Activated T-helper 2 cell treated with anti-CD3 and anti-CD28 coated beads, Interferon-gamma antibody, Interleukin-2, Interleukin-4, amounts not matched to agents 10 μg/mL and 5 μg/mL and 100 μg/mL, durations not matched to agents 14 hours and 24 hours and 36 hours (primary cell): ENCODE measurements at regions of chr17 and their contacts with region 1.

Region 1: GRCh38 chr17:49230636-49231562 is at the start of gene PHOSPHO1:
- DNase-seq: peak; percentile 83
- H3K4me3 Mint-ChIP-seq: peak within 1 kb of the TSS; percentile 78
- H3K27ac Mint-ChIP-seq: no peak within 1 kb of the TSS
- H3K4me1 Mint-ChIP-seq: peaks cover 12% of the 10 kb centered on the region
- H3K27me3 Mint-ChIP-seq: peaks cover 33% of the 10 kb centered on the region
- total RNA-seq, gene PHOSPHO1: not detected in 2 replicates

Region 2: DNA sequence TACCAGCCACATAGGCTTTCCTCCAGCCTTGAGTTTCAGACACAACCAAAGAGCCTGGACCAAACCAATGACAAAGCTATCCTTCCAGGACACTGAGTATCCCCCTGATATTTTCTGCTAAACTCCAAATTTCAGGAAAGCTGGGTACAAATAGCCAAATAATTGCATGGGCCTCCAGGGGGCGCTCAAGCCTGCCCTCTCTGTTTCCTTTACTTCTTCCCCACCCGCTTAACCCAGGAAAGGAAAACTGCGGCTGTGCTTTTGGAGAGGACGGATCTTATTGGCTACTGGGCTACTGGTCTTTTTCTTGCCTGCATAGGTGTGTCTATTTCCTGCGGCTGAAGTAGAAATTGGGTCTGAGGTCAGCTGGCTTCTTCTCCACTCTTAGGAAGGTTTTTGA is 50.6 kb before region 1 on chr17:
- intact Hi-C with region 1: loop called (anchors 1 kb)
- DNase-seq: peak; percentile 35
- H3K4me3 Mint-ChIP-seq: no peak overlapping the region
- H3K27ac Mint-ChIP-seq: no peak overlapping the region
- H3K4me1 Mint-ChIP-seq: peaks cover 2% of the 10 kb centered on the region
- H3K27me3 Mint-ChIP-seq: no peaks in the 10 kb centered on the region

Region 3: DNA sequence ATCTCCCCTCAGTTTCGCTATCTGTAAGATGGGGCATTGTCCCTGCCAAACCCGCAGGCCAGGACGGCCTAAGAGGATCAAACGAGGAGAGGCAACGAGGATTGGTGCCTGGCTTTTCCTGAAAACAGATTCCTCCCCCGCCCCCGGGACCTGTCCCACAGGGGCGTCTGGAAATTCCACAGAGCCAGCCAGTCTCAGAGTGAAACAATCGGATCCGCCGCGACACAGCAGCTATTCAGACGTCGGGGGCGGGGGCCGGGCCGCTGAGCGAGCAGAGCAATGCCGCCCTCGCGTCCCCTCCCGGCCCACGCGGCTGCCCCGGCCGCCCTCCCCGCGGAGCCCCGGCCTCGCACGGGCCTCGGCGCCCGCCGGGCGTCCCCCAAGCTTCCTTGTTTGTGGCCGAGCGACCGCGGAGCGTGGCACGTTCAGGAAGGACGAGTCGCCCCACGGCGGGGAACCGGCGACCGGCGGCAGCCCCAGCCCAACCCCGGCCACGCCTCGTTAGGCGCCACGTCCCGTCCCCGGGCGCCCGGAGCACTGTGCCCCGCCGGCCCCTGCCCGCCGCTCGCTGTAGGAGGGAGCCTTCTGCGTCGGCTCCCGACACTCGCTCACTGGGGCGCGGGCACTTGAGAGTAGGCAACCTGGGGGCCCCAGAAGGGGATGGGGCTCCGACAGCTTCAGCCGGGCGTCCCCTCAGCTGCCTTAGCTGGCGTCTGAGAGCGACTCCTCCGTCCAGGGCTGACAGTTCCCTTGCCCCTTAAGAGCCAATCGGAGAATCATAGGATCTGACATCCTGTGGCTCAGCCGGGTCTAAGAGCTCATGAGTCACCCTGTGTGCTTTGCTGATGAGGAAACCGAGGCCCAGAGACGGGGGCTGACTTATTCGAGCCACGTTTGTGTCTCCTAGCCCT is 29.4 kb after region 1 on chr17:
- intact Hi-C with region 1: loop called (anchors 2 kb)
- DNase-seq: peak; percentile 24
- H3K4me3 Mint-ChIP-seq: peak overlapping the region; percentile 81
- H3K27ac Mint-ChIP-seq: peak overlapping the region; percentile 60
- H3K4me1 Mint-ChIP-seq: peaks cover 11% of the 10 kb centered on the region
- H3K27me3 Mint-ChIP-seq: peaks cover 17% of the 10 kb centered on the region